K562 (cell line): ENCODE measurements at regions of chr15 and their contacts with region 1.

Region 1: DNA sequence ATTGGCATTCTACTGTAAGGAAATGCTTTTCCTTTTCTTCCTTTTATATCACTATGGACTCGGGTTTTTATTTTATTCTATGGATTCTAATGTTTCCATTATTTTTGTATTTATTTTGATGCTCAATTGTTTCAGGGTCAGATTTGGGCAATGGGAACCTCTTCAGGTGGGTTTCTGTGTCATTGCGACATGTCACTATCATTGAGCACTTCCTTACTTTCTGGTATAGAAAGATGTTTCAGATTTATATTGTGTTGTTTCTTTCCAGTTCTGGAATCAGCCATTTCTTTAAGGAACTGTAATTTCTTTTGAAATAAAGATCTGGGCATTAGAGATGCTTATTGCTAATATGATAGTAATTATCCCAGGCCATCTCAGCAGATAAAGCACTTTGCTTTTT is 21.8 kb downstream of the GALK2 start:
- DNase-seq: no peak
- ATAC-seq: no peak
- H3K4me3 ChIP-seq: no peak overlapping the region
- H3K27ac ChIP-seq: no peak overlapping the region
- H3K4me1 ChIP-seq: peaks cover 0 to 5% of the 10 kb centered on the region in 2 experiments; a peak in 2 of 5 replicates
- H3K27me3 ChIP-seq: no peaks in the 10 kb centered on the region
- CTCF ChIP-seq: no peak
- EP300 ChIP-seq: no peak
- POLR2A ChIP-seq: no peak
- RAD21 ChIP-seq: no peak

Region 2: GRCh38 chr15:48794697-48795134 is 397.2 kb before region 1 on chr15:
- CTCF ChIA-PET with region 1: no interaction called
- POLR2A ChIA-PET with region 1: no interaction called
- in situ Hi-C with region 1: no loop called
- intact Hi-C with region 1: no loop called
- DNase-seq: no peak
- ATAC-seq: peak; percentile 51; the same call in 2 of the 3 replicates
- H3K4me3 ChIP-seq: no peak overlapping the region
- H3K27ac ChIP-seq: peak overlapping the region; percentile 49; the same call in 1 of the 3 replicates
- H3K4me1 ChIP-seq: 0 out of 5 replicates have a peak, but pooled peaks cover 0 to 3% of the 10 kb centered on the region in 2 experiments
- H3K27me3 ChIP-seq: no peaks in the 10 kb centered on the region
- CTCF ChIP-seq: no peak
- EP300 ChIP-seq: no peak
- POLR2A ChIP-seq: no peak
- RAD21 ChIP-seq: no peak

Region 3: GRCh38 chr15:49155110-49155833 is 36.6 kb before region 1 on chr15 and contains the start of gene COPS2:
- CTCF ChIA-PET with region 1: no interaction called
- POLR2A ChIA-PET with region 1: no interaction called
- in situ Hi-C with region 1: no loop called
- intact Hi-C with region 1: loop called (anchors 1 kb)
- DNase-seq: peak; percentile 79 to 97 (median 84)
- ATAC-seq: peak; percentile 91
- H3K4me3 ChIP-seq: peak within 1 kb of the TSS; percentile 89
- H3K27ac ChIP-seq: peak within 1 kb of the TSS; percentile 95
- H3K4me1 ChIP-seq: peaks cover 0 to 5% of the 10 kb centered on the region in 2 experiments; a peak in 2 of 5 replicates
- H3K27me3 ChIP-seq: no peaks in the 10 kb centered on the region
- CTCF ChIP-seq: 0 out of 6 replicates have a peak, but pooled peaks of 1 of the 3 experiments have one; percentile 13
- EP300 ChIP-seq: peak; percentile 68
- POLR2A ChIP-seq: peak; percentile 89
- RAD21 ChIP-seq: no peak
- polyA plus RNA-seq, gene COPS2: 105 to 117 TPM

Region 4: GRCh38 chr15:49558924-49559323 is 367.0 kb after region 1 on chr15:
- CTCF ChIA-PET with region 1: no interaction called
- POLR2A ChIA-PET with region 1: no interaction called
- in situ Hi-C with region 1: no loop called
- intact Hi-C with region 1: no loop called
- DNase-seq: no peak
- ATAC-seq: no peak
- H3K4me3 ChIP-seq: no peak overlapping the region
- H3K27ac ChIP-seq: no peak overlapping the region
- H3K4me1 ChIP-seq: no peaks in the 10 kb centered on the region
- H3K27me3 ChIP-seq: no peaks in the 10 kb centered on the region
- CTCF ChIP-seq: no peak
- EP300 ChIP-seq: no peak
- POLR2A ChIP-seq: no peak
- RAD21 ChIP-seq: no peak